ENCODE measurements at regions of chr2 and their contacts with region 1.

Region 1: DNA sequence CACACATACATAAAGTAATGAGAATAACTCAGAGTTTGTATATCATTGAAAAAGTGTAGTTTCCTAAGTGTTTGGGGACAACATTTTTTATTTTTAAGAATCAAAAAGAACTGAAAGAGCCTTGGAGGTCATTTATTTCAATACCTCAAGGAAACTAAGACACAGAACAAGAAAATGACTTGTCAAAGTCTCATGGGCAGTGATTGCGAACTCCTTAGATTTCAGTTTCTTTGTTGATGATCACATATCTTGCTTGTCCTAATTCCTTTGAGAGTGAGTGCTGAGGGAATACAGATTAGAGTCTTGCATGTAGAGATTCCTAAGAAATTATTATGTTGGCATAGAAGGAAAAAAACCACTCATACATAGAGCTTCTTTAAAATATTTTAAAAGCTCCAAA is 243.8 kb downstream of the CAMKMT start:
- DNase-seq: no peak
- H3K4me3 ChIP-seq: no peak overlapping the region
- H3K27ac ChIP-seq: no peak overlapping the region
- H3K4me1 ChIP-seq: no peaks in the 10 kb centered on the region
- H3K27me3 ChIP-seq: no peaks in the 10 kb centered on the region
- CTCF ChIP-seq: no peak
- POLR2A ChIP-seq: no peak

Region 2: DNA sequence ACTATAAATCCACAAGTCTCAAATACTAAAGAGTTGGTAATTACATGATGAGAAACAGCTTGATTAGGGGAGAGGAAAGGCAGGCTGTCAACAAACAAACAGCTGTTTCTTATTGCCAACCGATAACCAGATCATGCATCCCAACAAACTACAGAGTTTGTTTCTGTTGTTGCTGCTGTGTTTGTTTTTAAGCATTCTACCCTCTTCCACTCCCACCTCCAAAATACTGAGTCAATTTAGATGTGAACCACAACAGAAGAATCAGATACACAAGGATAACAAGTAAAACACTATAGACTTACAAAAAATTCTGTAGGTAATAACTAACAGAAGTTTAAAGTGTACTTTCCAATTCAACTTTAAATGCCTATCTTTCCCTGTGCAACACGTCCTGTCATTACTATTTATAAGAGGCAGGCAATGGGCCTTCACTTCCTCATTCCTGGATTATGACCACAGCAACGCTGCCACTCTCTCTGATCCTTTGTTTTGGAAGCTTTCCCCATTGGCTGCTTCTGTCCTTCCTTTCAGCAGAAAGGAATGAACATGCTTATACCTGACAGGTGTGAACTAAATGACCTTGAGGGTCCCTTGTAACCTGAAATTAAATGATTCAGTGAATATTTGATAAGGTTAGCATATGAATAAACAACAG is 853.5 kb after region 1 on chr2:
- intact Hi-C with region 1: loop called (anchors 5 kb)
- DNase-seq: peak in 1 of 2 donors; percentile 37
- H3K4me3 ChIP-seq: no peak overlapping the region
- H3K27ac ChIP-seq: peak overlapping the region; percentile 71 to 75
- H3K4me1 ChIP-seq: no peaks in the 10 kb centered on the region
- H3K27me3 ChIP-seq: no peaks in the 10 kb centered on the region
- CTCF ChIP-seq: no peak
- POLR2A ChIP-seq: no peak

Measured in breast epithelium (tissue), 4 donors.